Calu3 (cell line): ENCODE measurements at regions of chr7 and their contacts with region 1.

Region 1: GRCh38 chr7:101138213-101138870 is 11.4 kb downstream of the SERPINE1 start:
- DNase-seq: peak; percentile 82
- H3K4me3 Mint-ChIP-seq: peak overlapping the region; percentile 66
- H3K27ac Mint-ChIP-seq: peak overlapping the region; percentile 96
- H3K4me1 Mint-ChIP-seq: peaks cover 30% of the 10 kb centered on the region
- H3K27me3 Mint-ChIP-seq: no peaks in the 10 kb centered on the region
- CTCF ChIP-seq: peak; percentile 74

Region 2: GRCh38 chr7:100696123-100696521 is 442.2 kb before region 1 on chr7:
- CTCF ChIA-PET with region 1: no interaction called
- intact Hi-C with region 1: no loop called
- DNase-seq: no peak
- H3K4me3 Mint-ChIP-seq: no peak overlapping the region
- H3K27ac Mint-ChIP-seq: no peak overlapping the region
- H3K4me1 Mint-ChIP-seq: peaks cover 10% of the 10 kb centered on the region
- H3K27me3 Mint-ChIP-seq: peaks cover 7% of the 10 kb centered on the region
- CTCF ChIP-seq: no peak

Region 3: GRCh38 chr7:100852048-100852872 is 286.1 kb before region 1 on chr7 and contains the start of gene SLC12A9:
- CTCF ChIA-PET with region 1: no interaction called
- intact Hi-C with region 1: no loop called
- DNase-seq: peak; percentile 87
- H3K4me3 Mint-ChIP-seq: peak within 1 kb of the TSS; percentile 85
- H3K27ac Mint-ChIP-seq: peak within 1 kb of the TSS; percentile 75
- H3K4me1 Mint-ChIP-seq: peaks cover 5% of the 10 kb centered on the region
- H3K27me3 Mint-ChIP-seq: no peaks in the 10 kb centered on the region
- CTCF ChIP-seq: peak; percentile 59
- total RNA-seq, gene SLC12A9: 29.9 and 36.6 TPM in 2 replicates

Region 4: GRCh38 chr7:101058355-101058754 is 80.0 kb before region 1 on chr7:
- CTCF ChIA-PET with region 1: no interaction called
- intact Hi-C with region 1: no loop called
- DNase-seq: peak; percentile 20
- H3K4me3 Mint-ChIP-seq: no peak overlapping the region
- H3K27ac Mint-ChIP-seq: no peak overlapping the region
- H3K4me1 Mint-ChIP-seq: no peaks in the 10 kb centered on the region
- H3K27me3 Mint-ChIP-seq: peaks cover 46% of the 10 kb centered on the region
- CTCF ChIP-seq: no peak

Region 5: DNA sequence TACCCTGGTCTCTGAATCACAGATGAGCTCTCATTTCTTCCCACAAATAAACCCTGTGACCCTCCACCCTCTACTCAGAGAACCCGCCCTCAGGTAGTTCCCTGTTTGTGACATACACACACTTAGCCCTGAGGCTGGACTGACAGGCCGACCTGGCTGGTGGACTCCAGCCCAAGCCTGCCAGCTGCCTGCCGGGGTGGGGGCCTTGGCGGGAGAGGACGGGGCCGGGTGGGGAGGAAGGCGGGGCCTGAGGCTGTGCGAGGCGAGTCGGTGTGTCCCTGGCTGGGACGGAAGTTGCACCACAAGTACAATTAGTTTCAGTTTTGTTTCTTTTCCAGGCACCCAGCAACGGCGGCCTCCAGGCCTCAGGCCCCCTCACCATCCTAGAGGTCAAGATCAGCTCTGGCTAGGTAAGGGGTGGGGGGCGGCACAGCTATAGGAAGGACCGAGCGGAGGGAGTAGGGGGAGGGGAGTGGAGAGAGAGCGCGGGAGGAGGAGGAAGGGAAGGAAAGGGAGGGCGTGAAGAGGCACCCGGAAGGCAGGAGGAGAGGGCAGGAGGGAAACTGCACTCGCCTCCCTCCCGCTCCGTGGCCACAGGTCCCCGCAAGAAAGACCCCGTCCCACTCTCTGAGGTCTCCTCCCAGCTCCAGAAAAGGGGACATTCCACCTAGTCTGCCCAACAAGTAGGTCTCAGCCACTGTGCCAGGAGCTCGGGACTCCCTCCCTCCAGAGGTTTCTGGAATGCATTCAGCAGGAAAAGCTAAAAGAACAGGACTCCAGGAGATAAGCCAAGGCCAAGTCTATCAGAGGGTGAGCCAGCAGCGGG is 53.0 kb before region 1 on chr7 and contains the start of gene TRIM56:
- CTCF ChIA-PET with region 1: no interaction called
- intact Hi-C with region 1: no loop called
- DNase-seq: peak; percentile 85
- H3K4me3 Mint-ChIP-seq: peak within 1 kb of the TSS; percentile 76
- H3K27ac Mint-ChIP-seq: peak within 1 kb of the TSS; percentile 32
- H3K4me1 Mint-ChIP-seq: peaks cover 11% of the 10 kb centered on the region
- H3K27me3 Mint-ChIP-seq: no peaks in the 10 kb centered on the region
- CTCF ChIP-seq: no peak
- total RNA-seq, gene TRIM56: 44.5 and 62.6 TPM in 2 replicates

Region 6: GRCh38 chr7:101099969-101100781 is 38.2 kb before region 1 on chr7:
- CTCF ChIA-PET with region 1: interaction called, 3 read pairs
- intact Hi-C with region 1: loop called (anchors 1 kb)
- DNase-seq: peak; percentile 82
- H3K4me3 Mint-ChIP-seq: no peak overlapping the region
- H3K27ac Mint-ChIP-seq: peak overlapping the region; percentile 35
- H3K4me1 Mint-ChIP-seq: peaks cover 16% of the 10 kb centered on the region
- H3K27me3 Mint-ChIP-seq: no peaks in the 10 kb centered on the region
- CTCF ChIP-seq: no peak

Region 7: DNA sequence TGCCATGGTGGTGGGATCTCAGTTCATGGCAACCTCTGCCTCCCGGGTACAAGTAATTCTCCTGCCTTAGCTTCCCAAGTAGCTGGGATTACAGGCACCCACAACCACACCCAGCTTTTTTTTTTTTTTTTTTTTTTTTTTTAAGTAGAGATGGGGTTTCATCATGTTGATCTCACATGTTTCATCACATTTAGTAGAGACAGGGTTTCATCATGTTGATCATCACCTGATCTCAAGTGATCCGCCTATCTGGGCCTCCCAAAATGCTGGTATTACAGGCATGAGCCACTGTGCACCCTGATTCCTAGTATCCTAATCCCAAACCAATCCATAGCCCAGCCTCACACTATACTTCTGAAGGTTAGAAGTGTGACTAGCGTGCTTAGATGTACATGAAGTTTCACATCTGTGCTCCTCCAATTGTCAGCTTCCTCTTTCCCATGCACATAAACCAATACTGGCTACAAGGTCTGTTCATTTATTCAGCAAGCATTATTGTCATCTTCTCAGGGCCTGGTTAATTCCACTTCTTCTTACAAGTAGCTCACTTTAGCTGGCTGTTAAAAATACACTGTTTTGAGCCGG is 48.6 kb after region 1 on chr7:
- CTCF ChIA-PET with region 1: interaction called, 38 read pairs
- intact Hi-C with region 1: no loop called
- DNase-seq: no peak
- H3K4me3 Mint-ChIP-seq: no peak overlapping the region
- H3K27ac Mint-ChIP-seq: no peak overlapping the region
- H3K4me1 Mint-ChIP-seq: no peaks in the 10 kb centered on the region
- H3K27me3 Mint-ChIP-seq: peaks cover 13% of the 10 kb centered on the region
- CTCF ChIP-seq: no peak

Region 8: GRCh38 chr7:101217388-101218235 is 79.3 kb after region 1 on chr7 and contains the starts of genes PLOD3 and ZNHIT1:
- CTCF ChIA-PET with region 1: interaction called, 13 read pairs
- intact Hi-C with region 1: no loop called
- DNase-seq: peak; percentile 85
- H3K4me3 Mint-ChIP-seq: peak within 1 kb of the TSS; percentile 80
- H3K27ac Mint-ChIP-seq: peak within 1 kb of the TSS; percentile 89
- H3K4me1 Mint-ChIP-seq: peaks cover 18% of the 10 kb centered on the region
- H3K27me3 Mint-ChIP-seq: no peaks in the 10 kb centered on the region
- CTCF ChIP-seq: peak; percentile 15
- total RNA-seq, gene PLOD3: 103 and 108 TPM in 2 replicates
- total RNA-seq, gene ZNHIT1: 57.2 and 57.5 TPM in 2 replicates

Region 9: DNA sequence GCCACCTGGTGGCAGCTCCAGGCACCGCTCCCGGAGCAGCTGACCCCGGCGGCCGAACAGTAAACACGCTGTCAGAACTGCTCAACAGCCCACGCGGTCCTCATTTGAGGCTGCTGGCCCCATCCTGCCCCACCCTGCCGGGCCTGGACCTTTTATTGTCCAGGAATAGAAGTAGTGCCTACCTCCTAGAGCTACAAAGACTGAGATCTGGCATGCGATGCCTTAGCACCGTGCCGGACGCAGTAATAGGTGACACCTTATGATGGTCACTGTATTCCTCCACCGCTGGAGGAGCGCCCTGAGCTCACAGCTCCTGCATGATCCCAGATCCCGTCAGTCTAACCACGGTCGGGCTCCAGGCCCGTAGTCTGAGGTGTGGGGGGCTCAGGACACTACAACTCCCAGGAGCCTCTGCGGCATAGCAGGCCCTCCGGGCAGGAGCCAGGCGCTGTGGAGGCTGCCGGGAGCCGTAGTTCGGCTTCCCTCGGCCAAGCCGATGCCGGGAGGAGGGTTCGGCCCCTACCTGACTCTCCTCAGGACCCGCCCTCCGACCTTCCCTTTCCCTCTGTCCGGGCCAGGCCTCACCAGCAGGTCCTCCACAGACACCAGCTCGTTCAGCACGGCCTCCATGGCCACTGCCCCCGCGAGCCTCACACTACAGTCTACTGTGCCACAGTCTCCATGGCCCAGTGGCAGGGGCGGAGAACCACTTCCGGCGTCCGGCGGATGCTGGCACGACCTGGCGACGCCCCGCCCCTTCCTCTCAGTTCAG is 106.2 kb after region 1 on chr7 and contains the start of gene FIS1:
- CTCF ChIA-PET with region 1: interaction called, 10 read pairs
- intact Hi-C with region 1: no loop called
- DNase-seq: peak; percentile 90
- H3K4me3 Mint-ChIP-seq: peak within 1 kb of the TSS; percentile 97
- H3K27ac Mint-ChIP-seq: peak within 1 kb of the TSS; percentile 91
- H3K4me1 Mint-ChIP-seq: no peaks in the 10 kb centered on the region
- H3K27me3 Mint-ChIP-seq: no peaks in the 10 kb centered on the region
- CTCF ChIP-seq: peak; percentile 66
- total RNA-seq, gene FIS1: 83.8 and 90.0 TPM in 2 replicates

Region 10: GRCh38 chr7:101287032-101287431 is 148.7 kb after region 1 on chr7:
- CTCF ChIA-PET with region 1: interaction called, 29 read pairs
- intact Hi-C with region 1: loop called (anchors 10 kb)
- DNase-seq: no peak
- H3K4me3 Mint-ChIP-seq: no peak overlapping the region
- H3K27ac Mint-ChIP-seq: no peak overlapping the region
- H3K4me1 Mint-ChIP-seq: no peaks in the 10 kb centered on the region
- H3K27me3 Mint-ChIP-seq: peaks cover 62% of the 10 kb centered on the region
- CTCF ChIP-seq: no peak